RWPE1 (cell line): ENCODE measurements at regions of chr12 and their contacts with region 1.

Region 1: DNA sequence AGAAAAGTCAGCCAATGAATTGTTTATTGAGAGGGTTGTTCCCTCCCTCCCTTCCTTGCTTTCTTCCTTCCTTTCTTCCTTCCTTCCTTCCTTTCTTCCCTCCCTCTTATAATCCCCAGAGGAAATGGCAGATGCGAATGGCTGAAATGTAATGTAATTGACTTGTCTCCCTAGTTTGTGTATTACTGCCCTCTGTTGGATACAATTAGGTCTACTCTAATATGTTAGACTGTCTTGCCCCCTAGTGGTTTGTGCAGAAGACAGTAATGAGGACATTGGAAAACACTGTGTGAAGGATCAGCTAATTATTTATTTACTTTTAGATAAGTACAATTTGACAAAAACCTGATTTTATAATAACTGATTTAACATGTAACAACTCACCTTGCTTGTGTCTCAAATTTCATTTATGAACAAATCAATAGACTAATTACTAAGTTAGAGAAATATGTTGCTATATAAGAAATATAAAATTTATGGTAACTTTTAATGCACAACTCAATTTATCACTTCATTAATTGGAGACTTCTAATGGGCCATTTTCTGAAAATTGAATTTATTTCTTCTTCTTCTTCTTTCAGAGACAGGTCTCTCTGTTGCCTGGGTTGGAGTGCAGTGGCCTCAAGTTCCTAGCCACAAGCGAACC is 229.8 kb upstream of the LRIG3 start:
- DNase-seq: peak; percentile 67
- H3K27ac ChIP-seq: no peak overlapping the region
- CTCF ChIP-seq: peak; percentile 94

Region 2: DNA sequence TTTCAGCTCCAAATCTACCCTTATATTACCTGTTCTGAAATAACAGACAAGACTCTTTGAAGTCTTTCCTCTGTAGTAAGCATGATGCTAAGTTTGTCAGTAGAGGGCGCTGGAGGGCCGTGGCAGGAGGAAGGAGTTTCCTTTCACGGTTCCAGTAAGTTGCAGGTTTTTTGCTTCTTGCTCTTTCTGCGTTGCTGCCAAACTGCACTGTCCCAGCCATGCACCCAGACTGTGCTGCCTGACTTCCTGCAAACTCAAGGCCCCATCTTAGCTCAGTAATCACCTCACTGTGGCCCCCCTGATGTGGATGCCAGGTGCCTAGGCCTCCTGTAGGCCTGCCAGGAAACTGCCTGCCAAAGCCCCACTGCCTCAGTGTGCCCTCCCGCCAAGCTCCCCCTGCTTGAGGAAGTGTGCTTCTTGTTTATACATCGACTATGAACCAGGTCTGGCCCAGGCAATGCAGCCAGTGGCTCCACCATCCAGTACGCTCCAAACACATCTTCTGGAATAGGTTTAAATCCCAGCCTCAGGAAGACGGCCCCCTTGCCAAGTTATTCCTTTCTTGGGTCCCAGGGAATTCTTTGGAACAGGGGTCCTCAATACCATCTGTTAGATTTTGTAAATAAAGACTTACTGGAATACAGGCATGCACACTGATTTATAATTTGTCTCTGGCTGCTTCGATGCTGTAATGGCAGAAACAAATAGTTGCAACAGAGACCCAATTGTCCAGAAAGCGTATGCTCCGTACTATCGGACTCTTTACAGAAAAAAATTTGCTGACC is 36.1 kb before region 1 on chr12:
- CTCF ChIA-PET with region 1: interaction called, 11 read pairs
- POLR2A ChIA-PET with region 1: no interaction called
- DNase-seq: peak; percentile 54
- H3K27ac ChIP-seq: peak overlapping the region; percentile 36; the same call in 1 of the 2 replicates
- CTCF ChIP-seq: peak; percentile 80

Region 3: DNA sequence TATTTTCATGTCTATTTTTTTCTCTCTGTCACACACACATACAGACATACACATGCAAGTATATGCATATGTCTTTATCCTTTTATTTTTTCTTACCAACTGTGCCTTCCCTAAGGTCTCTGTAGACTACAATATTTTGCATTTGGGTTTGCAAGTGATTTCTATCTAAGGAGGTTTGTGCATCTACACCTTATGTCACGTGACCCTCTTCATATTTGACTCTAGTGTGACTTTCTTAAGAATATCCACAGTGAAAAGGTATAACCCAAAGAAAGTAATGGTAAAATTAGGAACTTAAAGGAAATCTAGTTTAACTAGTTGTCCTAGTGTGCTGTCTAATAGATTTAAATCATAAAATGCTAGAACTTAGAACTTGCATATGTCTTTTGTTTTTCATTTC is 69.0 kb after region 1 on chr12:
- CTCF ChIA-PET with region 1: no interaction called
- POLR2A ChIA-PET with region 1: no interaction called
- DNase-seq: no peak
- H3K27ac ChIP-seq: no peak overlapping the region
- CTCF ChIP-seq: no peak